PC-3 (cell line): ENCODE measurements at regions of chr4 and their contacts with region 1.

Region 1: DNA sequence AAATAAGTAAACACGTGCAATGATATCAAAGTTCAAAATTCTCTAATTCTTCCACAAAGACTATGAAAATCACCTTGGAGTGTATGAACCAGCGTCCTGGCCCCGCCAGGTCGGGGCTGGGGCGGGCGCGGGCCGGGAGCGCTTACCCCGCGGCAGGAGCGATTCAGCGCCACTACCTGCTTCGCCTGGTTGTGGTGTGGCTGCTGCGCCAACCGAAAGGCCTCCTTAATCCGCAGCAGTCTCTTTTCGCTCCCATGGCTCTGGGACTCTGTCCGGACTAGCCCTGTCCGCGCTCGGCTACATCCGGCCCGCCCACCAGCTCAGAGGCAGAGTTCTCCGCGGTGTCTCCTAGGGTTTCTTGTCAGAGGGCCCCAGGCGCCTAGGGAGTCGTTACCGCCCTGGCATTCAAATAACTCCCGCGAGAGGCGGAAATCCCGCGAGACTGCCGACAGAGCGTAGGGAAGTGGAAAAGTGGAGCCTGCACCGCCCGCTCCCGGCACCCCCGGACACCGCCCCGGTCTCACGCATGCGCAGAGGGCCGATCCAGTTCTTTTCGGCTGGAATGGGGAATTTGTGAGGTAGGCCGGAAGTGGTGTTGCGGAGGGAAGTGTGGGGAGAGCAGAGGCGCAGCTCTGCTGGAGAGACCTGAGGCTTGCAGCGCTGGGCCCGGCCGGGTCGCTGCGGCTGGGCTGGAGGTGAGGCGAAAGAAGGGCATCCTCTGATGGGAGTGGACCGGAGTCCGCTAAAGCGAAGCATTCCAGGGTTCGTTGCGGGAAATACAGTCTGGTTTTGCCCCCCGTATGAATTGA is at the start of gene FAM200B:
- DNase-seq: peak; percentile 99
- ATAC-seq: peak; percentile 92
- H3K4me3 ChIP-seq: peak within 1 kb of the TSS; percentile 98
- H3K27ac ChIP-seq: peak within 1 kb of the TSS; percentile 85
- H3K4me1 ChIP-seq: peaks cover 53% of the 10 kb centered on the region
- H3K27me3 ChIP-seq: no peaks in the 10 kb centered on the region
- CTCF ChIP-seq: no peak
- total RNA-seq, gene FAM200B: 20.1 and 20.7 TPM in 2 replicates

Region 2: GRCh38 chr4:15551740-15552446 is 129.5 kb before region 1 on chr4:
- CTCF ChIA-PET with region 1: no interaction called
- POLR2A ChIA-PET with region 1: no interaction called
- intact Hi-C with region 1: no loop called
- DNase-seq: no peak
- ATAC-seq: no peak
- H3K4me3 ChIP-seq: no peak overlapping the region
- H3K27ac ChIP-seq: no peak overlapping the region
- H3K4me1 ChIP-seq: no peaks in the 10 kb centered on the region
- H3K27me3 ChIP-seq: no peaks in the 10 kb centered on the region
- CTCF ChIP-seq: no peak

Region 3: GRCh38 chr4:15665753-15666365 is 15.6 kb before region 1 on chr4:
- CTCF ChIA-PET with region 1: no interaction called
- POLR2A ChIA-PET with region 1: no interaction called
- intact Hi-C with region 1: loop called (anchors 2 kb)
- DNase-seq: peak; percentile 88
- ATAC-seq: peak; percentile 96
- H3K4me3 ChIP-seq: no peak overlapping the region; the same call in 1 of the 2 replicates
- H3K27ac ChIP-seq: peak overlapping the region; percentile 63
- H3K4me1 ChIP-seq: peaks cover 23% of the 10 kb centered on the region
- H3K27me3 ChIP-seq: no peaks in the 10 kb centered on the region
- CTCF ChIP-seq: no peak